ENCODE measurements at regions of chr4 and their contacts with region 1.

Region 1: DNA sequence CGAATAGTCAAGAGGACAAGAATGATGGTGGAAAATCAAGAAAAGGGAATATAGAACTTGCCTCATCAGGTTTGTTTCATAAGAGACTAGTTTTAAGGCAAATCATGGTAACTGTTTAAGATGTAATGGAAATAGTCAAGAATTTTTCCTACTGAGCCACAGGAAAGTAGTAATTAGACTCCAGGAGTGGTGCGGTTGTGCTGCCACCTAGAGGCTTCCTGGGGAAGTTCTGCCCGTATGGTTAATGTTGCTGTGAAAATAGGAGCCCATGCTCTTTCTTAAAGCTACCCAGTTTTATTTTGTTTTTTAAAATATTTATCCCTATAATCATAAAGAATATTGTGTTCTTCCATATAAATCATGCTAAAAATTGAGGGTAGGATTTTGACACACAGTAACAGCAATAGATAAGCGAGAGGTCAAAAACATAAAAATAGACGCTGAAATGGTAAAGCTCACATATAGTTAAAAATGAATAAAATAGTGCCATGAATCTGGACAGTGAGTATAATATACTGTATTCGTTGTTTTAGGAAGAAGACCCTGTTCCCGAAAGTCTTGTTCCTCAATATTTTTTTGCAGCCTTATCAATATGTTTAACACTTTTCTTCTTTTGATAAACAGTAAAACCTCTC is 87.0 kb downstream of the PHOX2B start:
- DNase-seq: peak; percentile 64
- ATAC-seq: no peak
- H3K4me3 Mint-ChIP-seq: no peak overlapping the region
- H3K27ac Mint-ChIP-seq: no peak overlapping the region
- H3K4me1 Mint-ChIP-seq: no peaks in the 10 kb centered on the region
- H3K27me3 Mint-ChIP-seq: peaks cover 12% of the 10 kb centered on the region
- CTCF ChIP-seq: peak; percentile 88

Region 2: DNA sequence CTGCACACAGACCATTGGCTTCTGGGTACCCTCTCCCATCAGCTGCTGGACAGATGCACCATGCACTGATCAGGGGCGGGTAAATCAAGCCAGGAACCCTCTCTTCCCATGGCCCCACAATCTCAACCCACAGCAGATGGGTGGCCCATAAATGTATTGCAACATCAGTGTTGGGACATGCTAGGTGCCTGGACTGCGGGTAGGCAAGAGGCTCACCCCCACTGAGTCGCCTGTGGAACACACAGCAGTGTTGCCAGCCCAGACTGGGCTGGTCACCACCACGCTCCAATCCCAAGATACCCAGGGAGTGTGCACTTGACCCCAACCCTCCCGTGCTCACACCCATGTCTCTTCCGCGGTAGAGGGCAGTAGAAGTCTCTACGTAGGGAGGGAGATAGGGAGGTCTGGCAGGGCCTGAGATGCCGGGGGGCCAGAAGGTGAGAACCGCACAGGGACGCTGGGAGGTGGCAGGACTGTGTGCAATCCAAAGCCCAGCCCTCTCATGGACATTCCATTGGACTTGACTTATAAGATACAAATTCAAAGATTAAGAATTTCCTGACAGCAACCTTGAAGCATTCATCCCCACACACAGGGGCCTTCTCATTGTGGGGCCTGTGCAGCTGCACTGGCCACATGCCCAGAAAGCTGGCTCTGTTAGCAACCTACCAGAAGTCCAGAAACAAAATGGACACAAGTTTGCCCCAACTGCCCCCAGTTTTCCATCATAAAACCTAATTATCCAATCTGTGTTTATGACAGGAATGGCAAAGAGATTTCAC is 728.1 kb before region 1 on chr4:
- CTCF ChIA-PET with region 1: no interaction called
- POLR2A ChIA-PET with region 1: no interaction called
- intact Hi-C with region 1: loop called (anchors 10 kb)
- DNase-seq: no peak
- ATAC-seq: no peak
- H3K4me3 Mint-ChIP-seq: no peak overlapping the region
- H3K27ac Mint-ChIP-seq: no peak overlapping the region
- H3K4me1 Mint-ChIP-seq: no peaks in the 10 kb centered on the region
- H3K27me3 Mint-ChIP-seq: peaks cover 5% of the 10 kb centered on the region
- CTCF ChIP-seq: no peak

Region 3: GRCh38 chr4:41281038-41281634 is 380.4 kb before region 1 on chr4:
- CTCF ChIA-PET with region 1: interaction called, 65 read pairs
- POLR2A ChIA-PET with region 1: no interaction called
- intact Hi-C with region 1: loop called (anchors 1 kb)
- DNase-seq: peak; percentile 33
- ATAC-seq: peak; percentile 83
- H3K4me3 Mint-ChIP-seq: no peak overlapping the region
- H3K27ac Mint-ChIP-seq: no peak overlapping the region
- H3K4me1 Mint-ChIP-seq: no peaks in the 10 kb centered on the region
- H3K27me3 Mint-ChIP-seq: peaks cover 7% of the 10 kb centered on the region
- CTCF ChIP-seq: peak; percentile 85

Region 4: GRCh38 chr4:41631523-41631922 is 30.0 kb before region 1 on chr4:
- CTCF ChIA-PET with region 1: no interaction called
- POLR2A ChIA-PET with region 1: no interaction called
- intact Hi-C with region 1: no loop called
- DNase-seq: no peak
- ATAC-seq: no peak
- H3K4me3 Mint-ChIP-seq: no peak overlapping the region
- H3K27ac Mint-ChIP-seq: no peak overlapping the region
- H3K4me1 Mint-ChIP-seq: no peaks in the 10 kb centered on the region
- H3K27me3 Mint-ChIP-seq: no peaks in the 10 kb centered on the region
- CTCF ChIP-seq: no peak

Measured in activated CD8-positive, alpha-beta T cell treated with anti-CD3 and anti-CD28 coated beads for 36 hours (primary cell).